ENCODE measurements at regions of chr9 and their contacts with region 1.

Region 1: GRCh38 chr9:92325269-92325990 is at the starts of genes CENPP and NOL8:
- DNase-seq: peak; percentile 85 to 87 (median 85)
- H3K4me3 ChIP-seq: peak within 1 kb of the TSS; percentile 87 to 97 (median 91)
- H3K4me3 Mint-ChIP-seq: peak within 1 kb of the TSS; percentile 100
- H3K27ac ChIP-seq: peak within 1 kb of the TSS; percentile 94 to 98
- H3K27ac Mint-ChIP-seq: peak within 1 kb of the TSS; percentile 98 to 100 (median 99)
- H3K4me1 ChIP-seq: peaks cover 23 to 29% of the 10 kb centered on the region in 2 donors
- H3K4me1 Mint-ChIP-seq: peaks cover 26% of the 10 kb centered on the region
- H3K27me3 ChIP-seq: no peaks in the 10 kb centered on the region
- H3K27me3 Mint-ChIP-seq: no peaks in the 10 kb centered on the region
- CTCF ChIP-seq: no peak
- polyA plus RNA-seq, gene CENPP: 0.50 to 1.1 (median 1.1) TPM
- polyA plus RNA-seq, gene NOL8: 2.9 to 22.0 (median 8.8) TPM

Region 2: DNA sequence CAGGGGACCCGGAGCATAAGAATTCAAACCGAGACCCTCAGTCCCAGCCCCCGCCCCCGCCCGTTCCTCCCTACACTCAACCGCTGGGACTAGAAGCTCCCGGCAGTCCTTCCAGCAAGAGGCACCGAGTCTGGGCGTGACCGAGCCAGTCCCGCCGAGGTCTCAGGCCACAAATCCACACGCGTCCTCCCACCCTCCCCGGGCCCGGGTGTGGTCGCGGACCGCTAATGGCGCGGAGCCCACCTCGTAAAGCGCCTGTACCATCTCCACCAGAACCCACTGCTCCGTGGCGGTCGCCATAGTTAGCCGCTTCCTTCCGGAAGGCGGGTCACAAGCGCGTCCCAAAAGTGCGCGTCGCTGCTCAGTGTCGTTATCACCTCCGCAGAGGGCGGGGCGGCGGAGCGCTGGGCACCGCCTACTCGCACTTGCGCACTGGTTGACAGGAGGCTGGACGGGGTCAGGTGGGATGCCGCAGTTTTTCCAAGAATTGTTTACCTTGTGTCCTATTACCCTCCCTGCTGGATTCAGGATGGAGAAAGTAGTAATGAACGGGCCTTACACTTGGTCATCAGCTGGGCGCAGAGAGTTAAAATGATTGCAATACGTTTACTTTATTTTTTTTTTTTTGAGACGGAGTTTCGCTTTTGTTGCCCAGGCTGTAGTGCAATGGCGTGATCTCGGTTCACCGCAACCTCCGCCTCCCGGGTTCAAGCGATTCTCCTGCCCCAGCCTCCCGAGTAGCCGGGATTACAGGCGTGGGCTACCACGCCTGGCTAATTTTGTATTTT is 210.2 kb before region 1 on chr9 and contains the start of gene SPTLC1:
- intact Hi-C with region 1: loop called (anchors 1 to 10 kb)
- DNase-seq: peak; percentile 94 to 95 (median 94)
- H3K4me3 ChIP-seq: peak within 1 kb of the TSS; percentile 88 to 92 (median 89)
- H3K4me3 Mint-ChIP-seq: peak within 1 kb of the TSS; percentile 93 to 99
- H3K27ac ChIP-seq: peak within 1 kb of the TSS; percentile 76 to 97
- H3K27ac Mint-ChIP-seq: peak within 1 kb of the TSS; percentile 98 to 100 (median 99)
- H3K4me1 ChIP-seq: peaks cover 33 to 41% of the 10 kb centered on the region in 2 donors
- H3K4me1 Mint-ChIP-seq: peaks cover 22% of the 10 kb centered on the region
- H3K27me3 ChIP-seq: no peaks in the 10 kb centered on the region
- H3K27me3 Mint-ChIP-seq: peaks cover 0 to 1% (median 1%) of the 10 kb centered on the region in 3 donors
- CTCF ChIP-seq: no peak
- polyA plus RNA-seq, gene SPTLC1: 37.4 to 92.4 (median 80.0) TPM

Region 3: DNA sequence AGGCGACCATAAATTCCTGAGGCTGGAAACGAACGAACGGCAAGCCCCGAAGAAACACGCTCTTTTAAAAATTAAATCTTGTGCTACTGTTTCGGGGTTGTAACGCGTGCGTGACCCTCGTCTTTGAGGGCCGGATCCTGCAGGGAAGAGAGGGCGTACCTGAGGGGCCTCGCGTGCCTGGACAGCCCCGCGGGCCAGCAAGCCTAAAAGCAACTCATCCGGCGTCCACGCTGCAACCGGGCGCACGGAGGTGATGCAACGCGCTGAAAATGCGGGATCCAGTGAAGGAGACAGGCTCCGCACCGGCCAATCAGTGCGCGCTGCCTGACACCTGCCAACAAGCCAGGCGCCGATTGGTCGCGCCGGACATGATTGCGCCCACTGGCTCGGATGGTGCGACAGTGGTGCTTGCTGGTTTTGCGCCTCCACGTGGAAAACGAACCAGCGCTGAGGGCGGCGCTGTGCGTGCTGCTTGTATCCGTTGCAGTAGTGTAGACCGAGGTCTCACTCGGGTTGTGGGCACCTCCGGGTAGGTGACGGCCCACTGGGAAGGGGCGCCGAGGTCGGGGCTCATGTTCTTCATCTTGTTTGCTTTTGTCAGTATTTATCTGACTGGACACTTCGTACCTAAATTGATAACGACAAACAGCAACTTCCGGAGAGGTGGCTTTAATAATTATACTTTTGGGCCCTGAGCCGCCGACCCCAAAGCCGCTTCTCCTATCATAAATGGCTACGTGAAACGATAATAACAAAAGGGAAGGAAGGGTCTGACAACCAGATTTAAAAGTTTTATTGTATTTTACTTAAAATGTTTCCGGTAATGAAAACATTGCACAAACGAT is 31.8 kb before region 1 on chr9 and contains the start of gene IARS1:
- intact Hi-C with region 1: loop called (anchors 2 to 5 kb)
- DNase-seq: peak; percentile 98
- H3K4me3 ChIP-seq: peak within 1 kb of the TSS; percentile 79 to 93 (median 84)
- H3K4me3 Mint-ChIP-seq: peak within 1 kb of the TSS; percentile 92 to 97
- H3K27ac ChIP-seq: peak within 1 kb of the TSS; percentile 73 to 89
- H3K27ac Mint-ChIP-seq: peak within 1 kb of the TSS; percentile 82 to 95 (median 91)
- H3K4me1 ChIP-seq: peaks cover 14 to 23% of the 10 kb centered on the region in 2 donors
- H3K4me1 Mint-ChIP-seq: peaks cover 20% of the 10 kb centered on the region
- H3K27me3 ChIP-seq: no peaks in the 10 kb centered on the region
- H3K27me3 Mint-ChIP-seq: no peaks in the 10 kb centered on the region
- CTCF ChIP-seq: peak; percentile 26
- polyA plus RNA-seq, gene IARS1: 7.1 to 24.2 (median 22.8) TPM

Region 4: GRCh38 chr9:92634712-92635605 is 309.5 kb after region 1 on chr9:
- intact Hi-C with region 1: loop called in 1 of 2 experiments (anchors 10 kb)
- DNase-seq: peak; percentile 53 to 60 (median 57)
- H3K4me3 ChIP-seq: no peak overlapping the region
- H3K4me3 Mint-ChIP-seq: no peak overlapping the region
- H3K27ac ChIP-seq: no peak overlapping the region
- H3K27ac Mint-ChIP-seq: peak overlapping the region in 3 of 7 donors; percentile 4 to 18 (median 12)
- H3K4me1 ChIP-seq: no peaks in the 10 kb centered on the region
- H3K4me1 Mint-ChIP-seq: no peaks in the 10 kb centered on the region
- H3K27me3 ChIP-seq: no peaks in the 10 kb centered on the region
- H3K27me3 Mint-ChIP-seq: no peaks in the 10 kb centered on the region
- CTCF ChIP-seq: peak; percentile 96